WTC11 (cell line): ENCODE measurements at regions of chr14 and their contacts with region 1.

Region 1: DNA sequence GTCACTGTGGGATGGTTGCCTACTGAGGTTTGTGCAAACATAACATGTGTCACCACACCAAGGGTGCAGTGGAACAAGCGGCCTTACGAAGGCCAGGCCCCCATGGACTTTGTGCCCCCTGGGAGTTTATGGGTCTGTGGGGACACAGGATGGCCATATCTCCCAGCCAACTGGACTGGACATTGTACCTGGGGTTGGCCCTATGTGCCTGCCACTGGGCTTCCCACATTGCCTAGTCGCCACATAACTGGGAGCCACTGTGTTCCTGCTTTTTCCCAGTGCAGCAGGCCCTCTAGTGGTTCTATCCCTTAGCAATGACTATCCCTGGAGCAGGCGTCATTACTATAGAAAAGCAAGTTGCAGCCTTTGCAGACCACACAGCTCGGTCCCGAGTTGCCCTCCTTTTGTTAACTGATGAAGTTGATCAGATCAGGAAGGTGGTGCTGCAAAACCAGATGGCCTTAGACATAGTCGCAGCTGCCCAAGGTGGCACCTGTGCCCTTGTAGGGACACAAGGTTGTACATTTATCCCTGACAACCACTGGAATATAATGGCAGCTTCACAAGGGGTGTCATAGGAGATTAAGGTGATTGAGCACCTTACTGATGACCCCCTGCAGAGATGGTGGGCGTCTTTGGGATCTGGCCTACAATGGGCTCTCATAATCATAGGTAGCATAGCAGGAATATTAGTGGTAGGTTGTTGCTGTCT is 15.2 kb upstream of the RNASE12 start:
- DNase-seq: peak; percentile 67
- ATAC-seq: peak; percentile 66
- H3K4me3 Mint-ChIP-seq: no peak overlapping the region
- H3K27ac Mint-ChIP-seq: no peak overlapping the region
- H3K4me1 Mint-ChIP-seq: peaks cover 11% of the 10 kb centered on the region
- H3K27me3 Mint-ChIP-seq: no peaks in the 10 kb centered on the region
- CTCF ChIP-seq: no peak

Region 2: DNA sequence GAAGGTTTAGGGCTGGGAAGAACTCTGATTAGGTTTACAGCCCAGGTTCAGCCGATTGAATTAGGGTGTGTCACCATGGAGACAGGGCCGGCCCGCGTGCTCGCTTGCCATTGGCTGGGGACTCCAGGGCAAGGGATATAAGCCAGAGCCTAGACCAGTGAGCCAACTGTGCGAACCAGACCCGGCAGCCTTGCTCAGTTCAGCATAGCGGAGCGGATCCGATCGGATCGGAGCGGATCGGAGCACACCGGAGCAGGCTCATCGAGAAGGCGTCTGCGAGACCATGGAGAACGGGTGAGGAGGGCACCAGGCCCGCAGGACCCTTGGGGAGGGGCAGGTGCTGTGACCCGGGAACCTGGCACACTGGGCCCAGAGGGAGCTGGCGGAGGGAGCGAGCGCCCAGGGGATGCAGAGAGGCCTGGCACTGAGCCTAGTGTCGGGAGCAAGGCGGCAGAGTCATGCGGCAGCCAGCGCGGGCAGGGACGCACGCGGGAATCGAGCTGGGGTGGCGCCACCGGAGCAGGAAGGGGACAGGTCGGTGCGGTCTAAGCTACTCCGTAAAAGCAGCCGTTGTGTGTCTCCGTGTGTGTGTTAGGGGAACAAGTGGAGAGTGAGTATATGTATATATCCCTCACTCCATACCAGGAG is 137.0 kb before region 1 on chr14 and contains the start of gene PNP:
- CTCF ChIA-PET with region 1: interaction called, 10 read pairs
- POLR2A ChIA-PET with region 1: interaction called, 3 read pairs
- DNase-seq: peak; percentile 92
- ATAC-seq: peak; percentile 98
- H3K4me3 Mint-ChIP-seq: peak within 1 kb of the TSS; percentile 99
- H3K27ac Mint-ChIP-seq: peak within 1 kb of the TSS; percentile 98
- H3K4me1 Mint-ChIP-seq: peaks cover 19% of the 10 kb centered on the region
- H3K27me3 Mint-ChIP-seq: peaks cover 6% of the 10 kb centered on the region
- CTCF ChIP-seq: no peak
- total RNA-seq, gene PNP: 72.7 to 95.8 TPM (median 75.0 TPM) in 3 replicates

Region 3: GRCh38 chr14:20503898-20504297 is 102.4 kb before region 1 on chr14:
- CTCF ChIA-PET with region 1: no interaction called
- POLR2A ChIA-PET with region 1: no interaction called
- DNase-seq: no peak
- ATAC-seq: no peak
- H3K4me3 Mint-ChIP-seq: no peak overlapping the region
- H3K27ac Mint-ChIP-seq: no peak overlapping the region
- H3K4me1 Mint-ChIP-seq: peaks cover 15% of the 10 kb centered on the region
- H3K27me3 Mint-ChIP-seq: peaks cover 5% of the 10 kb centered on the region
- CTCF ChIP-seq: no peak

Region 4: GRCh38 chr14:20530771-20531571 is 75.4 kb before region 1 on chr14:
- CTCF ChIA-PET with region 1: interaction called, 13 read pairs
- POLR2A ChIA-PET with region 1: no interaction called
- DNase-seq: peak; percentile 80
- ATAC-seq: peak; percentile 89
- H3K4me3 Mint-ChIP-seq: no peak overlapping the region
- H3K27ac Mint-ChIP-seq: no peak overlapping the region
- H3K4me1 Mint-ChIP-seq: peaks cover 7% of the 10 kb centered on the region
- H3K27me3 Mint-ChIP-seq: no peaks in the 10 kb centered on the region
- CTCF ChIP-seq: peak; percentile 57

Region 5: DNA sequence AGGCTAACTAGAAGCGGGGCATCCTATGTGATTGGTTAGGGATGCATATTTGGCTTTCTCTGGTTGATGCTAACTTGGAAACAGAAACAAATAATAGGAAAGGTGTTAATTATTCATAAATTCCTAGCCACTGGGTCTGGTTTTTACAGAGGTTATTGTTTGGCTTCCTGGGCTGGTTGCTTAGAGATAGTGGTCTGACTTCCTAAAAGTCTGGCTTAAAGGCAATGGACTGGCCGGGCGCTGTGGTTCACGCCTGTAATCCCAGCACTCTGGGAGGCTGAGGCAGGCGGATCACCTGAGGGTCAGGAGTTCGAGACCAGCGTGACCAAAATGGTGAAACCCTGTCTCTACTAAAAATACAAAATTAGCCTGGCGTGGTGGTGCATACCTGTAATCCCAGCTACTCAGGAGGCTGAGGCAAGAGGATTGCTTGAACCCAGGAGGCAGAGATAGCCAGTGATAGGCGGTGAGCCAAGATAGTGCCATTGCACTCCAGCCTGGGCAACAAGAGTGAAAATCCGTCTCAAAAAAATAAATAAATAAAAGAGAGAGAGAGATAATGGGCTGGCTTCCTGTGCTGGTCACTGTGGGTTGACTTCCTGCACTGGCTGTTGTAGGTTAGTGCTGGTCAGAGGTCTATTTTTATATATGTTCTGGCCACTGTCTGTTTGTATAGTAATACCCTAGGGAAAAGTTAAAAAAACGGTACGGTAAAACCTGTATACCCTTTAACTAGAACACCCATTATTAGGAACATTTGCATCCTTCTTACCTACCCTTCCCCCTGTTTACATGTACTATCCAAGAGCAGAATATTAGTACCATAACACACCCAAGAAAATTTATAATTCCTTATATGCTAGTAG is 11.0 kb after region 1 on chr14:
- CTCF ChIA-PET with region 1: no interaction called
- POLR2A ChIA-PET with region 1: no interaction called
- DNase-seq: no peak
- ATAC-seq: no peak
- H3K4me3 Mint-ChIP-seq: no peak overlapping the region
- H3K27ac Mint-ChIP-seq: no peak overlapping the region
- H3K4me1 Mint-ChIP-seq: peaks cover 11% of the 10 kb centered on the region
- H3K27me3 Mint-ChIP-seq: no peaks in the 10 kb centered on the region; the same call in 1 of the 2 replicates
- CTCF ChIP-seq: no peak

Region 6: GRCh38 chr14:20774338-20774737 is 168.0 kb after region 1 on chr14:
- CTCF ChIA-PET with region 1: no interaction called
- POLR2A ChIA-PET with region 1: no interaction called
- DNase-seq: no peak
- ATAC-seq: no peak
- H3K4me3 Mint-ChIP-seq: peak overlapping the region; percentile 56
- H3K27ac Mint-ChIP-seq: peak overlapping the region; percentile 99
- H3K4me1 Mint-ChIP-seq: peaks cover 70% of the 10 kb centered on the region
- H3K27me3 Mint-ChIP-seq: peaks cover 8% of the 10 kb centered on the region
- CTCF ChIP-seq: no peak

Region 7: DNA sequence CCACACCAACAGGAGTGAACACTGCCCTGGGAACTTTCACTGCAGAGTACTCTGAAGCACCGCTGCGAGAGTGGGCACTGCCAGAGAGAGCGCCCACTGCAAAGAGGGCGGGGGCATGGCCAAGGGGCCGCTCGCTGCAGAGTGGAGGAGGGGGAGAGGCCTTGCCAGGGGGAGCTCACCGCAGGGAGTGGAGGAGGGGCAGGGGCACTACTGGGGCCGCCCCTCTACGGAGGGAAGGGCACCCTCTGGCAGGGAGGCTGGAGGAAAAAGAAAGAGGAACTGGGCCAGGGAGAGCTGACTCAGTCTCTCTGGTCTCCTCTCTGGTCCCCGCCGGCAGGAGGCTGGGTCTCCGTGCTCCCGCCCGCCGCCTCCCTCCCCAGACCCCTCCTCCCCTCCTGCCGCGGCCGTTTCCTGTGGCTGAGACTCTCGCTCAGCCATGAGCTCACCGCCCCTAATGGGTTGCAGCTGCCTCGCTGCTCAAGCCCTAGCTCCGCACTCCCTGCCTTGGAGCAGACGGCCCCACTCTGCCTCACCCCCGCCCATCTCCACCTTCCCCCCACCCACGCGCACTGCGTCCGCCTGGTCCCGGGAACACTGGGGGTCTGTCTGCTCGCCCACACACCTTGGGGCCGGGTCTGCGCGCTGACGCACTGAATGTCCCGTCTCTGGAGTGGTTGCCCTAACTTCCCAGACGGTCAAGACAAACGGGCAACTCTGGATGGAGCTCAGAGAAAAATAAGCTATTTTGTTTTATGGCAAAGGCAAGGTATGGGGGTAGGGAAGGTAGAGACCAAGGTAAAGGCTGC is 465.1 kb after region 1 on chr14:
- CTCF ChIA-PET with region 1: no interaction called
- POLR2A ChIA-PET with region 1: no interaction called
- DNase-seq: peak; percentile 88
- ATAC-seq: peak; percentile 46
- H3K4me3 Mint-ChIP-seq: peak overlapping the region; percentile 89
- H3K27ac Mint-ChIP-seq: peak overlapping the region; percentile 80
- H3K4me1 Mint-ChIP-seq: peaks cover 33% of the 10 kb centered on the region
- H3K27me3 Mint-ChIP-seq: peaks cover 4% of the 10 kb centered on the region; the same call in 1 of the 2 replicates
- CTCF ChIP-seq: no peak